ENCODE measurements at regions of chr6 and their contacts with region 1.

Region 1: GRCh38 chr6:43263314-43264178 is 20.3 kb downstream of the TTBK1 start:
- DNase-seq: peak; percentile 95
- CTCF ChIP-seq: peak; percentile 90

Region 2: DNA sequence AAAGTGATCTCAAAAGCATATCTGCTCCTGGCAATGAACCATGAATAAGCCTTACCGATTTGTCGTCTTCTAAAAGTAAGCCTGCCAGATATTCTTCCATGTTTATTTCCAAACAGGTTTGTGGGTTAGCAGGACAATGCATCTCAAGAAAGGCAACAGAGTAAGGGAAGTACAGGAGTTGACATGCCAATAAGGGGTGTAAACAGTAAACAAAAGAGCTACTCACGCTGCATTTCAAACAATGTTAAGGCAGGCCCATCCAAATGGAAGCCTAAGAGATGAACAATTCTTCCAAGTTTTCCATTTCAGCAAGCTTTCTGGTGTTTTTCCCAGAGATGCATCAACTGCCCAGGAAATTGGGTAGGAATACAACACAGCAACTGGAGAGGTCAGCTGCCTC is 72.8 kb after region 1 on chr6:
- in situ Hi-C with region 1: no loop called
- DNase-seq: no peak
- CTCF ChIP-seq: no peak

Region 3: GRCh38 chr6:43347021-43347420 is 83.5 kb after region 1 on chr6:
- in situ Hi-C with region 1: no loop called
- DNase-seq: no peak
- CTCF ChIP-seq: no peak

Region 4: DNA sequence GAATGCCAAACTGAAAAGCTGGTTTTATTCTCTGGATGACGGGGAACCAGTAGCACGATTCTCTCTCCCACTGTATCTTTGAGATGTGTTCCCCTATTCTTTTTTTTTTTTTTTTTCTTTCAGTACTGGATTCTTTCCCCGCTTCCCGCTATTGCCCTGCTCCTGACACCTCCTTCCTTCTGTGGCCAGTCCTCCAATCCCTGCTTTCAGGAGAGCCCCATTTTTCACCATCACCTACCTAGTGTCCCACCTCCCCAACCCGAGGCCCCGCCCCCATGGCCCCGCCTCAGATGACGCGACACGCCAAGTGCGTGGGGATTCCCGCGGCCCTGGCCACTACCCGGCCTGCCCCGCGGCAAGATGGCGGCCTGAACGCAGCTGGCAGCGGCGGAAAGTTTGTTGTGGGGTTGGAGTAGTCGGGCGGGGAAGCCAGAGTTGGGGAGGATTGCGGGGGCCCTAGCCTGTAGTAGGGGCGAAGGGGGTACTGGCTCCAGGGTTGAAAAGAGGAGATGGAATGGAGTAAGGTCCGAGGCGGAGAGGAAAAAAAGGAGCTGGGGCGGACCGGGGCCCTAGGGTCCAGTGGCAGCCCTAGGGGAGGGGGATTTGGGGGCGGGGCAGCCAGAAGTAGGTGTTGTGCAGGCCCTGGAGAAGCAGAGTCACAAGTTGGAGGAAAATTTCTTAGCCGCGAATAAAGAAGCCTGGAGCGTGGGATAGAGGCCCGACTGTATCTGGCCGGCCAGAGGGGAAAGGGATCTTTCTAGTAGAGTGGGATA is 213.9 kb after region 1 on chr6 and contains the start of gene TJAP1:
- in situ Hi-C with region 1: loop called (anchors 25 kb)
- DNase-seq: peak; percentile 97
- CTCF ChIP-seq: no peak

Region 5: GRCh38 chr6:43698584-43699349 is 435.2 kb after region 1 on chr6:
- in situ Hi-C with region 1: no loop called
- DNase-seq: no peak
- CTCF ChIP-seq: no peak